ENCODE measurements at regions of chr1 and their contacts with region 1.

Region 1: GRCh38 chr1:205321164-205321958 is at the start of gene NUAK2:
- DNase-seq: peak; percentile 90 to 99 (median 96)
- ATAC-seq: peak; percentile 99
- H3K4me3 ChIP-seq: peak within 1 kb of the TSS; percentile 49
- H3K27ac ChIP-seq: no peak within 1 kb of the TSS
- H3K4me1 ChIP-seq: peaks cover 3 to 15% of the 10 kb centered on the region in 2 experiments; a peak in 4 of 5 replicates
- H3K27me3 ChIP-seq: peaks cover 28 to 71% of the 10 kb centered on the region in 2 experiments
- CTCF ChIP-seq: peak; percentile 41 to 79 (median 47); a peak in 5 of 6 replicates
- EP300 ChIP-seq: no peak
- POLR2A ChIP-seq: no peak
- RAD21 ChIP-seq: peak in 1 of 2 experiments; percentile 40; a peak in 2 of 4 replicates
- polyA plus RNA-seq, gene NUAK2: 0.04 to 0.10 TPM

Region 2: GRCh38 chr1:204975570-204976235 is 345.7 kb before region 1 on chr1:
- CTCF ChIA-PET with region 1: interaction called, 4 read pairs
- POLR2A ChIA-PET with region 1: interaction called, 3 read pairs
- in situ Hi-C with region 1: no loop called
- intact Hi-C with region 1: loop called (anchors 5 kb)
- DNase-seq: peak; percentile 66 to 86 (median 83)
- ATAC-seq: peak; percentile 90
- H3K4me3 ChIP-seq: no peak overlapping the region
- H3K27ac ChIP-seq: no peak overlapping the region
- H3K4me1 ChIP-seq: peaks cover 4 to 12% of the 10 kb centered on the region in 2 experiments; a peak in 3 of 5 replicates
- H3K27me3 ChIP-seq: peaks cover 34 to 74% of the 10 kb centered on the region in 2 experiments
- CTCF ChIP-seq: peak; percentile 85 to 93 (median 90)
- EP300 ChIP-seq: no peak
- POLR2A ChIP-seq: no peak
- RAD21 ChIP-seq: peak; percentile 81 to 93

Region 3: DNA sequence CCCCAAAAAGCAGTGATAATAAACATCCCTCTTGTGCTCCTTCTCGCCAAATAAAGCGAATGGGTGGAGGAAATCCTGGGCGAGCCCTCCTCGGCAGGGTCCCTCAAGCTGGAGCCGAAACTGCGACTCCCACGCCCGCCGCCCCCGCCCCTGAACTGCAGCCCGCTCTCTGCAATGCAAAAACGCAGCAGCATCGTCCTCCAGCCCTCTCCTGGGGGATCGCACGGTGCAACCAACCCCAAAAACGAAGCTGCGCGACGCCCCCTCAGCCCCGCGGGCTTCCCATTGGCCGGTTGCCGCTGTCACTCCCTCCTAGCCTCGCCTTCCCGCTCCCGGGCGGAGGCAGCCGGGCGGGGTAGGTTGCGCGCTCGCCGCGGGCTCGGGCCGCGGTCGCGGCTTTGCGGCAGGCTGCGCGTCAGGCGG is 93.8 kb before region 1 on chr1 and contains the start of gene TMCC2:
- CTCF ChIA-PET with region 1: interaction called, 4 read pairs
- POLR2A ChIA-PET with region 1: no interaction called
- in situ Hi-C with region 1: no loop called
- intact Hi-C with region 1: loop called (anchors 2 kb)
- DNase-seq: peak; percentile 95 to 100 (median 99)
- ATAC-seq: peak; percentile 96
- H3K4me3 ChIP-seq: peak within 1 kb of the TSS; percentile 47
- H3K27ac ChIP-seq: no peak within 1 kb of the TSS
- H3K4me1 ChIP-seq: peaks cover 27 to 29% of the 10 kb centered on the region in 2 experiments
- H3K27me3 ChIP-seq: peaks cover 3 to 13% of the 10 kb centered on the region in 2 experiments; a peak in 4 of 5 replicates
- CTCF ChIP-seq: no peak
- EP300 ChIP-seq: no peak
- POLR2A ChIP-seq: no peak
- RAD21 ChIP-seq: no peak; a peak in 1 of 4 replicates
- polyA plus RNA-seq, gene TMCC2: 0.06 to 0.10 TPM

Region 4: DNA sequence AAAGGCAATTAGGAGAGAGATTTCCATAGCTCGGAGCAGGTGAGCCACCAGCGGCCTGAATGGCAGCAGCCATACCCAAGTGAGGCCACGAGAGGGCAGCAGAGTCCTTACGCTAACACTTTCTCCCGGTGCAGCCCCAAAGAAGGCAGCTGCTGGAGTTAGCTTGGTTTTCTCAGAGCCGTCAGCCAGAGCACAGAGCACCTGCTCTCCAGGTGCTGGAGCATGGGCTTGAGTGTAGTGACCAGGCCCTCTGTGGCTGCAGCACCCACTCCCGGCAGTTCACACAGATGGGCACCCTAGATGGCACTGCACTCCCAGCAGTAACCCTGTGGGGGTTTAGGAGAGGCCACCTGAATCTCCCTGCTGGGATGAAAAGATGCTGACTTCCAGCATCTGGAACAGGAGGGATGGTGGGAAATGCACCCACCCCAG is 47.8 kb before region 1 on chr1:
- CTCF ChIA-PET with region 1: interaction called, 144 read pairs
- POLR2A ChIA-PET with region 1: interaction called, 15 read pairs
- in situ Hi-C with region 1: loop called (anchors 5 kb)
- intact Hi-C with region 1: loop called (anchors 1 kb)
- DNase-seq: peak; percentile 88 to 92 (median 90)
- ATAC-seq: peak; percentile 94
- H3K4me3 ChIP-seq: no peak overlapping the region
- H3K27ac ChIP-seq: no peak overlapping the region
- H3K4me1 ChIP-seq: peaks cover 6 to 29% of the 10 kb centered on the region in 2 experiments
- H3K27me3 ChIP-seq: peaks cover 1 to 13% of the 10 kb centered on the region in 2 experiments; a peak in 4 of 5 replicates
- CTCF ChIP-seq: peak; percentile 96 to 99 (median 98)
- EP300 ChIP-seq: 0 out of 2 replicates have a peak, but pooled peaks have one; percentile 12
- POLR2A ChIP-seq: no peak
- RAD21 ChIP-seq: peak; percentile 99

Region 5: DNA sequence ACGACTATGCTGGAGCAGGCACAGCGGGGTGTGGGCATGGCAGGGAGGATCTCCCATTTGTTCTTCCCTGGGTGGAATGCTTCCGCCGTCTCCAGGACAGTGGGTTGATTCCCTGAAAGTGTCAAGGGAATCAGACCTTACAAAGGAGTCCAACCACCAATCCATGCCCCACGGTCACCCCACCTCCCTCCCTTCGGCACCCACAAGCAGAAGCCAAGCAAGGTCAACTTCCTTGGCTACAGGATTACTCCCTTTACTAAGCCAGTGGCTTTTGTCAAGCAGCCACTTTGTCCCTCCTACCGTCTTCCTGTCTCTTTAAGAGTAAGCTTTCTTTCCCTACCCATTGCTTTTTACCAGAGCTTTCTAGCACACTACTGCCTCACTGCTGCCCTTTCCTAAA is 16.1 kb after region 1 on chr1:
- CTCF ChIA-PET with region 1: no interaction called
- POLR2A ChIA-PET with region 1: no interaction called
- in situ Hi-C with region 1: no loop called
- intact Hi-C with region 1: no loop called
- DNase-seq: no peak
- ATAC-seq: no peak
- H3K4me3 ChIP-seq: no peak overlapping the region
- H3K27ac ChIP-seq: no peak overlapping the region
- H3K4me1 ChIP-seq: no peaks in the 10 kb centered on the region
- H3K27me3 ChIP-seq: peaks cover 11 to 52% of the 10 kb centered on the region in 2 experiments
- CTCF ChIP-seq: no peak
- EP300 ChIP-seq: no peak
- POLR2A ChIP-seq: no peak
- RAD21 ChIP-seq: no peak

Region 6: DNA sequence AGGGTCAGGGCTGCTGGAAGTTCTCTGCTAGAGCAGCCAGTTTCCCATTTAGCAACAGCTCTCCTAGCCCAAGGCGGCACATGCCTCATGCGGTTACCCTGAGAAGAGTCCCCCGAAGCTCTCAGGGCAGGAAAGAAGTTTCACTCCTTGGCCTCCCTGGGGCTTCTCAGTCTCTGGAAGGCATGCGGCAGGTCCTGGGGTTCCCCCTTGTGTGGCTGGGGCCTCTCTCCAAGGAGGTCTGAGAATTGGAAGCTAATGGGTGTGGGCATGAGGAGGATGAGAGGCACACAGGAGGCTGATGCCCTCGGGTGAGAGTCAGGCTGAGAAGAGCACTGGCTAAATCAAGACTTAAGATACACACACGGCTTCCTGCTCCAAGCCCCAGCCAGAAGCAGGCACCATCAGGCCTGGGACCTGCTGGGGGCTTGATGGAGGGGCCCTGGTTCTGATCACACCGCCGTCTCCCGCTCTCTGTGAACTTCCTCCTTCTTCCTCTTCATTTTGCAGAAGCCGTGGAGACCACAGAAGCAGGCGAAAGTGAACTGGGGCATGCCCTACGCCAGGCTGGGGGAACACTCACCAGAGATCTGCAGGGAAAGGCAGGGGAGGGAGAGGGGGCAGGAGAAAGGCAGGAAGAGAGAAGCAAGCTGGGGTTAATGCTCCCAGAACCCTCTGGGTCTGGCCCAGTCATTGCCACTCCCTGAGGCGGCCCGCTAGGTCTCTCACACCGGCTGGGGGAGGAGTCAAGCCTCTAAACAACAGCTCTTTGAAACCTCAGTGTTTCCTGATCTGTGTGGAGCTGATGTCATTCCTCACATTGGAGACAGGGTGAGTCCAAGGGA is 119.3 kb after region 1 on chr1:
- CTCF ChIA-PET with region 1: no interaction called
- POLR2A ChIA-PET with region 1: no interaction called
- in situ Hi-C with region 1: no loop called
- intact Hi-C with region 1: no loop called
- DNase-seq: peak; percentile 70 to 80 (median 74)
- ATAC-seq: peak; percentile 84
- H3K4me3 ChIP-seq: no peak overlapping the region
- H3K27ac ChIP-seq: peak overlapping the region; percentile 36; the same call in 1 of the 3 replicates
- H3K4me1 ChIP-seq: peaks cover 19 to 31% of the 10 kb centered on the region in 2 experiments
- H3K27me3 ChIP-seq: peaks cover 0 to 18% of the 10 kb centered on the region in 2 experiments; a peak in 3 of 5 replicates
- CTCF ChIP-seq: 0 out of 6 replicates have a peak, but pooled peaks of 1 of the 3 experiments have one; percentile 4
- EP300 ChIP-seq: no peak
- POLR2A ChIP-seq: no peak
- RAD21 ChIP-seq: no peak